K562 (cell line): ENCODE measurements at regions of chr2 and their contacts with region 1.

Region 1: GRCh38 chr2:84925724-84926376 is 20.4 kb downstream of the TMSB10 start:
- DNase-seq: peak; percentile 86 to 99 (median 88)
- ATAC-seq: peak; percentile 92
- H3K4me3 ChIP-seq: peak overlapping the region; percentile 41
- H3K27ac ChIP-seq: no peak overlapping the region; the same call in 2 of the 3 replicates
- H3K4me1 ChIP-seq: peaks cover 13 to 19% of the 10 kb centered on the region in 2 experiments
- H3K27me3 ChIP-seq: no peaks in the 10 kb centered on the region; a peak in 1 of 5 replicates
- CTCF ChIP-seq: peak; percentile 99 to 100 (median 99)
- EP300 ChIP-seq: peak; percentile 42; the same call in 1 of the 2 replicates
- POLR2A ChIP-seq: no peak
- RAD21 ChIP-seq: peak; percentile 98 to 99

Region 2: DNA sequence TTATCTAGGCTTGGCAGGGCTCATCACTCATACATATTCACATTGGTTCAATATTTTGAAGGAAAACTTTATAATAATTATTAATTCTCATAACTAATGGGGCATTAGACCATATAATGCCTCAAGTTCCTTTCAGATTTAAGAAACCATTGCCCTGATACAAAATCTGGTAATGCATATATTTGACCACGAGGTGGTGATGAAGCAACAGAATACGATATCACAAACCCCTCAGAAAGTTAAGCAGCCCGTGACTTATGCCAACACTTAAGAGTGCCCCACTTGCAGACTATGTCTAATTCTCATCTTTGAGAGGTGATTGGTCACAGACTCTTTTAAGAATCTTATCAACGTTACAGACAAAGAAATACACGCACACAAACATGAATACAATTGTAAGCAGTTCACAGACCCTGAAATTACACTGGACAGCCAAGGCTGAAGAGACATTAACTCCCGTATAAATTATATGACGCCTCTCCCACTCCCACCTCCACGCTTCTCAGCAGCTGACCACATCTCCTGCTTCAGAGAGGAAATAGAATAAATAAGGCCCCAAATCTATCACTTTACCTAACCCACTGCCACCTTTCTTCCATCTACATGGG is 430.2 kb before region 1 on chr2:
- CTCF ChIA-PET with region 1: interaction called, 10 read pairs
- POLR2A ChIA-PET with region 1: no interaction called
- in situ Hi-C with region 1: loop called (anchors 5 kb)
- intact Hi-C with region 1: loop called (anchors 2 kb)
- DNase-seq: peak; percentile 18 to 61 (median 33)
- ATAC-seq: peak; percentile 86
- H3K4me3 ChIP-seq: no peak overlapping the region
- H3K27ac ChIP-seq: no peak overlapping the region
- H3K4me1 ChIP-seq: no peaks in the 10 kb centered on the region
- H3K27me3 ChIP-seq: 0 out of 5 replicates have a peak, but pooled peaks cover 0 to 3% of the 10 kb centered on the region in 2 experiments
- CTCF ChIP-seq: peak; percentile 52 to 70 (median 57)
- EP300 ChIP-seq: no peak
- POLR2A ChIP-seq: no peak
- RAD21 ChIP-seq: peak; percentile 80 to 87

Region 3: DNA sequence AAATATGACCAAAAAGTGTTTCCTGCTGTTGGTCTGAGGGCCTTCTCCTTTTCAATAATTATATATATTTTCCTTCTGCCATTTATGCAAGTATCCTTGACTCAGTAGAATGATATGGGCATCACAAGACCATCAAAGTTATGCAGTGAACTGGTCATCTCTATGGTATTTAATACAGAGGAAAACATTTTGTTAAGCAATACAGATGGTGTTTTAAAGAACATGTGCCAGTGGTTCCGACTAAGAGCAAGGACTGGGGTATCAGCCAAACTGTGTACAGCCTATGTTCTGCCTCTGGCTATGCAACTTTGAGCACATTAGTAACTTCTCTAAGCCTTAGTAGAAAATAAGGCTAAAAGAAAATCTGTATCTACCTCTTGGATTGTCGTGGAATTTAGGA is 224.0 kb before region 1 on chr2:
- CTCF ChIA-PET with region 1: no interaction called
- POLR2A ChIA-PET with region 1: no interaction called
- in situ Hi-C with region 1: no loop called
- intact Hi-C with region 1: no loop called
- DNase-seq: no peak
- ATAC-seq: no peak
- H3K4me3 ChIP-seq: no peak overlapping the region
- H3K27ac ChIP-seq: no peak overlapping the region
- H3K4me1 ChIP-seq: no peaks in the 10 kb centered on the region
- H3K27me3 ChIP-seq: no peaks in the 10 kb centered on the region
- CTCF ChIP-seq: no peak
- EP300 ChIP-seq: no peak
- POLR2A ChIP-seq: no peak
- RAD21 ChIP-seq: no peak

Region 4: GRCh38 chr2:84870306-84870705 is 55.5 kb before region 1 on chr2:
- CTCF ChIA-PET with region 1: interaction called, 20 read pairs
- POLR2A ChIA-PET with region 1: no interaction called
- in situ Hi-C with region 1: no loop called
- intact Hi-C with region 1: loop called (anchors 1 kb)
- DNase-seq: peak in 2 of 4 experiments; percentile 20 to 35
- ATAC-seq: peak; percentile 83
- H3K4me3 ChIP-seq: no peak overlapping the region
- H3K27ac ChIP-seq: no peak overlapping the region
- H3K4me1 ChIP-seq: no peaks in the 10 kb centered on the region
- H3K27me3 ChIP-seq: peaks cover 19 to 35% of the 10 kb centered on the region in 2 experiments
- CTCF ChIP-seq: peak; percentile 45 to 52 (median 51)
- EP300 ChIP-seq: no peak
- POLR2A ChIP-seq: no peak
- RAD21 ChIP-seq: peak; percentile 63 to 68

Region 5: GRCh38 chr2:84905181-84906107 is 20.4 kb before region 1 on chr2 and contains the start of gene TMSB10:
- CTCF ChIA-PET with region 1: interaction called, 7 read pairs
- POLR2A ChIA-PET with region 1: interaction called, 78 read pairs
- in situ Hi-C with region 1: no loop called
- intact Hi-C with region 1: loop called (anchors 2 kb)
- DNase-seq: peak; percentile 84 to 91 (median 88)
- ATAC-seq: peak; percentile 88
- H3K4me3 ChIP-seq: peak within 1 kb of the TSS; percentile 96
- H3K27ac ChIP-seq: peak within 1 kb of the TSS; percentile 91
- H3K4me1 ChIP-seq: peaks cover 19 to 23% of the 10 kb centered on the region in 2 experiments
- H3K27me3 ChIP-seq: no peaks in the 10 kb centered on the region
- CTCF ChIP-seq: 0 out of 6 replicates have a peak, but pooled peaks of 1 of the 3 experiments have one; percentile 9
- EP300 ChIP-seq: peak; percentile 44
- POLR2A ChIP-seq: peak; percentile 92
- RAD21 ChIP-seq: no peak
- polyA plus RNA-seq, gene TMSB10: 382 to 669 TPM

Region 6: DNA sequence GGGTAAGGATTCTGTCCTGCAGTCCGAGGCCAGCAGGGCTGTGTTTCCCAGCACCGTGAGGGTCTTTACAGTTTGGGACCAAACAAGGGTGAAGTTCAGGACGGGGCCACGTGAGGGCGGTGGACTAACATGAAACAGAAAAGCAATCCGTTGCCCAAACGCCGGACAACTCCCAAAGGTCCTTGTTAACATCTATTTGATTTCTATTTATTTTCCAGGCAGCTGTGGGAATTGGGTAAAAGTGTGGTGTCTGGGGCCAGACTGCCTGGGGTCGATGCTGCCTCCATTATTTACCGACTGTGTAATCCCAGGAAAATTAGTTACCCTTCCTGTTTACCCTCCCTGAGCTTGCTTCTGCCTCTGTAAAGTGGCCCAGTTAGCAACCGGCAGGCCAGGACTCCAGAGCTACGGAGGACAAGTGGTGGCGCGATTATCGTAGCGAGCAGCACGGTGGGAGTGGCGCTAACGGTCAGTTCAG is 141.1 kb after region 1 on chr2:
- CTCF ChIA-PET with region 1: no interaction called
- POLR2A ChIA-PET with region 1: no interaction called
- in situ Hi-C with region 1: no loop called
- intact Hi-C with region 1: loop called (anchors 2 kb)
- DNase-seq: peak; percentile 65 to 83 (median 69)
- ATAC-seq: peak; percentile 95
- H3K4me3 ChIP-seq: no peak overlapping the region
- H3K27ac ChIP-seq: no peak overlapping the region
- H3K4me1 ChIP-seq: peaks cover 2 to 7% of the 10 kb centered on the region in 2 experiments; a peak in 3 of 5 replicates
- H3K27me3 ChIP-seq: peaks cover 9 to 34% of the 10 kb centered on the region in 2 experiments
- CTCF ChIP-seq: peak; percentile 81 to 85 (median 82)
- EP300 ChIP-seq: no peak
- POLR2A ChIP-seq: no peak
- RAD21 ChIP-seq: peak; percentile 52 to 81

Region 7: DNA sequence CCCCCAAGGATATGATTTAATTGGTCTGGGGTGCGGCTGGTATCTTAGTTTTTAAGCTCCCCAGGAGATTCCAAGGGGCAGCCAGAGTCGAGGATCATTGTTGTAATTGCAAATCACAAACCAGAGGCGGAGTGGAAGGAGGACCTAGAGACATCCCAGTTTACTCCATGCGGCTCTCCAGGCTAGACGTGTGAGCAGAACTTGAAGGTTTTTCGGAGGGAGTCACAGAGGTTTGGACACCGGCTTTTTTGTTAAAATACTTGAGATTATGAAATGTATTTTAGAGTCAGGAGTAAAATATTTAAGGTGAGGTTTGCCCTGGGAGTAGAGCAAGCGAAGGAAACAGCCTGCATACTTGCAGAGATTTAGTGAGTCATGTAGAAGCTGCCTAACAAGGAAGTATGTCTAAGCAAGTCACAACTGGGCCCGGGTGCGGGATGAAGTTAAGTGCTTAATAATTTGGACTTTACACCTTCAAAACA is 362.4 kb after region 1 on chr2:
- CTCF ChIA-PET with region 1: interaction called, 4 read pairs
- POLR2A ChIA-PET with region 1: no interaction called
- in situ Hi-C with region 1: no loop called
- intact Hi-C with region 1: loop called (anchors 1 kb)
- DNase-seq: no peak
- ATAC-seq: no peak
- H3K4me3 ChIP-seq: no peak overlapping the region
- H3K27ac ChIP-seq: no peak overlapping the region
- H3K4me1 ChIP-seq: no peaks in the 10 kb centered on the region; a peak in 1 of 5 replicates
- H3K27me3 ChIP-seq: peaks cover 49 to 68% of the 10 kb centered on the region in 2 experiments
- CTCF ChIP-seq: no peak
- EP300 ChIP-seq: no peak
- POLR2A ChIP-seq: no peak
- RAD21 ChIP-seq: no peak

Region 8: DNA sequence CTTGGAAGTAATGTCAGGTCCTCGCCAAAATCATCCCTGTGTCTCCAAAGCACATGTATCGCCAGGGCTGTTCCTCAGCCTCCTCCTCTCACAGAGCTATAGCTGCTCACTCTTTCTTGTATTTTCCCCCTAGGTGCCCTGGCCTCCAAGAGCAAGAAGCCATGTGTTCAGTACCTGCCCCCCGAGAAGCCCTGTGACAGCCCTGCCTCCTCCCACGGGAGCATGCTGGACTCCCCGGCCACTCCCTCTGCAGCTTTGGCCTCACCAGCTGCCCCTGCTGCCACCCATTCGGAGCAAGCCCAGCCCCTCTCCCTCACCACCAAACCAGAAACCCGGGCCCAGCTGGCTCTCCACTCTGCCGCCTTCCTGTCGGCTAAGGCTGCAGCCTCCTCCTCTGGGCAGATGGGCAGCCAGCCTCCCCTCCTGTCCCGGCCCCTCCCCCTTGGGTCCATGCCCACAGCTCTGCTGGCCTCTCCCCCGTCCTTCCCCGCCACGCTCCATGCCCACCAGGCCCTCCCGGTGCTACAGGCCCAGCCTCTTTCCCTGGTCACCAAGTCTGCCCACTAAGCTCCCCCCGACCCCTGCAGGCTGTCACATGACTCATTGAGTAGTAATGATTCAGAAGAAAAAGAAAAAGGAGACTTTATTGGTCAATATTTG is 383.2 kb after region 1 on chr2:
- CTCF ChIA-PET with region 1: no interaction called
- POLR2A ChIA-PET with region 1: no interaction called
- in situ Hi-C with region 1: loop called (anchors 10 kb)
- intact Hi-C with region 1: no loop called
- DNase-seq: no peak
- ATAC-seq: no peak
- H3K4me3 ChIP-seq: no peak overlapping the region
- H3K27ac ChIP-seq: no peak overlapping the region
- H3K4me1 ChIP-seq: peaks cover 9 to 24% of the 10 kb centered on the region in 2 experiments; a peak in 4 of 5 replicates
- H3K27me3 ChIP-seq: peaks cover 9 to 22% of the 10 kb centered on the region in 2 experiments; a peak in 4 of 5 replicates
- CTCF ChIP-seq: no peak
- EP300 ChIP-seq: no peak
- POLR2A ChIP-seq: no peak
- RAD21 ChIP-seq: no peak

Region 9: GRCh38 chr2:85390941-85391669 is 465.3 kb after region 1 on chr2:
- CTCF ChIA-PET with region 1: no interaction called
- POLR2A ChIA-PET with region 1: no interaction called
- in situ Hi-C with region 1: no loop called
- intact Hi-C with region 1: no loop called
- DNase-seq: peak; percentile 79 to 85 (median 81)
- ATAC-seq: peak; percentile 96
- H3K4me3 ChIP-seq: no peak overlapping the region
- H3K27ac ChIP-seq: no peak overlapping the region
- H3K4me1 ChIP-seq: peaks cover 0 to 5% of the 10 kb centered on the region in 2 experiments; a peak in 1 of 5 replicates
- H3K27me3 ChIP-seq: no peaks in the 10 kb centered on the region
- CTCF ChIP-seq: peak; percentile 88 to 92 (median 91)
- EP300 ChIP-seq: no peak
- POLR2A ChIP-seq: no peak
- RAD21 ChIP-seq: peak; percentile 96 to 97